ENCODE measurements at regions of chr1 and their contacts with region 1.

Region 1: DNA sequence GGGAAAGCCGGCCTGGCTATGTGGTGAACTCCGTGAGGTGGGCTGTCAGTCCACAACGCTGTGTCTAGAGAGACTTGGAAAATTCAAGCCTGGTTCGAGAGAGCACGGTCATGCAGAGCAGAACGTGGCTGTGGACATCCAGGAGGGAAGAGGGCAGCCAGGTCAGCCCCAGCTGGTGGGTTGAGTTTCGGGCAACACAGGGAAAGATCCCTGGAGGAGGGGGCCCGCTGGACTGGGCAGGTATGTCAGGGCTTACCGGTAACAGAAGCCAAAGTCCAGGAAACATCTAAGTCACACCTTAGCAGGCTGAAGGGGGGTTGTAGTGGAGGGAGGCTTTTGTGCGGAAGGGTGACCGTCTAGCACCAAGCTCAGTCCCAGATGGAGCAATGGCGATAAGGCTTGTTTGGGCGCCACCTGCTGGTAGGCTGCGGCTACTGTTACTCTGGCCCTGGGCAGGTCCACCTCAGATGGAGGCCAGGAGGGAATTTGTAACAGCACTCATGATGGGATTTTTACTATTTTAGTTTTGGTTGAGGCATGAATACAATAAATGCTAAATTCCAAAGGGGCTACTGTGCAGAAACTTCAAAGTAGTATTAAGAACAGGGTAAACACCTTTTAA is 143.3 kb upstream of the ZNF644 start:
- DNase-seq: peak; percentile 89
- H3K4me3 Mint-ChIP-seq: no peak overlapping the region
- H3K27ac Mint-ChIP-seq: peak overlapping the region; percentile 13
- H3K4me1 Mint-ChIP-seq: peaks cover 15% of the 10 kb centered on the region
- H3K27me3 Mint-ChIP-seq: no peaks in the 10 kb centered on the region
- CTCF ChIP-seq: peak; percentile 91

Region 2: DNA sequence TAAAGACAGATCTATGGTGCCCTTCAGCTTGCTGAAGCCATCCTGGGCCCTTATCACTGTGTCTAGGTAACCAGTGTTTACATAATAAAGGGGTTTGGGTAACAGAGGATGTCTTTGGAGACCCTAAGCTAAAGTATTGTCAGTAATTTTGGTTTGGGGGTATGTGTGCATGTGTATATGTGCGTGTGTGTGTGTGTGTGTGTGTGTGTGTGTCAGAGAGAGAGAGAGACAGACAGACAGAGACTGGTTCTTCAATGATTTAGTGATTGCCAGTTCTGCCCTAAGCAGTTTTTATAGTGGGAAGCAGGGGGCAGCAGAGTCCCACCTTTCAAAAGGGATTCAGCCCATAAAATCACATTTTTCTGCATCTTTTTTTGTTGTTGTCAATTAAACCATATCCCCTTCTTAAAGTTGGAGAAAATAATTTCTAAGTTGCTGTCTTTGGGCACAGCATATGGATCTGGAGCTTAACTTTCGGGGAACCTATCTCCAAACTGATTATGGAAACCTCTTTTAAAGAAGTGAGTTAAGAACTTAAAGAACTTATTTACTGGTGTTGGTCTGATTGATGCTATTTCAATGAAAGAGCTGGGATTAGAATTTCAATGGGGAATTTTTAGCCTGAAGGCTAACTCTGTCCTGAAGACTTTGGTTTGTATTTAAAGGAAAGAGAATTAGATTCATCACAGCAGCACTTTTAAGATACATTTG is 1119.1 kb before region 1 on chr1:
- CTCF ChIA-PET with region 1: no interaction called
- intact Hi-C with region 1: loop called (anchors 5 kb)
- DNase-seq: peak; percentile 24
- H3K4me3 Mint-ChIP-seq: no peak overlapping the region
- H3K27ac Mint-ChIP-seq: no peak overlapping the region
- H3K4me1 Mint-ChIP-seq: no peaks in the 10 kb centered on the region
- H3K27me3 Mint-ChIP-seq: no peaks in the 10 kb centered on the region
- CTCF ChIP-seq: peak; percentile 56

Region 3: GRCh38 chr1:90721210-90722194 is 443.6 kb before region 1 on chr1:
- CTCF ChIA-PET with region 1: interaction called, 20 read pairs
- intact Hi-C with region 1: loop called (anchors 1 kb)
- DNase-seq: peak; percentile 71
- H3K4me3 Mint-ChIP-seq: no peak overlapping the region
- H3K27ac Mint-ChIP-seq: no peak overlapping the region
- H3K4me1 Mint-ChIP-seq: no peaks in the 10 kb centered on the region
- H3K27me3 Mint-ChIP-seq: no peaks in the 10 kb centered on the region
- CTCF ChIP-seq: peak; percentile 80

Region 4: GRCh38 chr1:91021686-91022517 is 143.2 kb before region 1 on chr1 and contains the start of gene ZNF644:
- CTCF ChIA-PET with region 1: interaction called, 23 read pairs
- intact Hi-C with region 1: loop called (anchors 2 kb)
- DNase-seq: peak; percentile 93
- H3K4me3 Mint-ChIP-seq: peak within 1 kb of the TSS; percentile 91
- H3K27ac Mint-ChIP-seq: peak within 1 kb of the TSS; percentile 99
- H3K4me1 Mint-ChIP-seq: peaks cover 25% of the 10 kb centered on the region
- H3K27me3 Mint-ChIP-seq: no peaks in the 10 kb centered on the region
- CTCF ChIP-seq: no peak
- total RNA-seq, gene ZNF644: 69.4 and 76.0 TPM in 2 replicates

Region 5: DNA sequence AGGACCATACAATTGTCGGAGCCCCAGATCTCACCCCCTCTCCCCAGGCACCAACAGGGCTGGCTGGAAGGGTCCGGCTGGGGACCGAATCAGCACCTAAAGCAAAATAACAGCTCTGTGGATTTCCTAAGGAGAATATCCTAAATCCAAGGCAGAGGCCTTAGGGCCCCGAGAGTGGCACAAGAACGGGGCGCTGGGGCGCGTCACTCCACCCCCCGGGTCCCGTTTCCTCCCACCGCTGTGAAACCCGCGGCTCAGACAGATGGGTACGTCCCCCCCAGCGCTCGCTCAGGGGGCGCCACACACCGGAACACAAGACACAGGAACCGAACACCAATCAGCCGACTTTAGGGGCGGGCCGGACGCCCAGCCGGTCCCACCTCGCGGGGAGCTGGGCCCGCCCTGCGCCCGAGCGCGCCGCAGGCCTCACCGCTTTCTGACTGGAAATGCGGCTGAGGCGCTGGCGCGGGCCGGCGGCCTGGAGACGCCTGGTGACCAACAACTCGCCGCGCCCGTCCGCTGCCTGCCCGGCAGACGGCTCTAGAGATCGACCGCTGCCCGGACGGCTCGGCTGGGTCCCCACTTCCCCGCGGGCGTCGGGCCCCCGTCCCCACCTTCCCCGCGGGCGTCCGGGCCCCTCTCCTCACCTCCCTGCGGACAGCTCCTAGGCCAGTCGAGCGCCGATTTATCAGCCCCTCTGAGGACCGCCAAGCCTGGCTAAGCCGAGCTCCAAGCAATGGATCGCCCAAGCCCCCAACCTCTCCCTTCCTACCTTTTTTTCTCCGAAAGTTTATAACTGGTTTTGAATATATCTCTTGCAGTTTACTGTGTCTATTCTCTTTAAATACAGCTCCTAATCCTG is 239.2 kb after region 1 on chr1 and contains the start of gene HFM1:
- CTCF ChIA-PET with region 1: interaction called, 4 read pairs
- intact Hi-C with region 1: loop called (anchors 5 kb)
- DNase-seq: peak; percentile 64
- H3K4me3 Mint-ChIP-seq: peak within 1 kb of the TSS; percentile 66
- H3K27ac Mint-ChIP-seq: no peak within 1 kb of the TSS
- H3K4me1 Mint-ChIP-seq: no peaks in the 10 kb centered on the region
- H3K27me3 Mint-ChIP-seq: peaks cover 51% of the 10 kb centered on the region
- CTCF ChIP-seq: no peak
- total RNA-seq, gene HFM1: not detected in 2 replicates